Aorta (tissue), 5 donors: ENCODE measurements at regions of chr3 and their contacts with region 1.

Region 1: DNA sequence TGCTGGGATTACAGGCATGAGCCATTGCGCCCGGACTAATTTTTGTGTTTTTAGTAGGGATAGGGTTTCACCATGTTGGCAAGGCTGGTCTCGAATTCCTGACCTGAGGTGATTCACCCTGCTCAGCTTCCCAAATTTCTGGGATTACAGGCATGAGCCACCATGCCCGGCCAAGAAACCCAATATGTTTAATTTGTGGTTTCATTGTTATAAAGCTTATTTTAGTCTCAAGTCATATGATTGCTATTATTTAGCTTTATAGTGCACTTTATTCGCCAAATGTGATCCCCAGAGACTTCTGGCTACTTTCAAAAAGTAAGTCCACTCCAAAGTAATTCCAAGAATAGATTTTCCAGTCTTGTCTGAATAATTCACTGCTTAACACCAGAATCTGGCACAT is 19.3 kb upstream of the SLC4A7 start:
- DNase-seq: peak; percentile 76 to 82
- ATAC-seq: peak; percentile 81
- H3K4me3 ChIP-seq: no peak overlapping the region
- H3K27ac ChIP-seq: peak overlapping the region; percentile 44 to 76
- H3K4me1 ChIP-seq: peaks cover 0 to 3% of the 10 kb centered on the region in 2 donors
- H3K27me3 ChIP-seq: no peaks in the 10 kb centered on the region

Region 2: GRCh38 chr3:27160146-27160545 is 343.4 kb before region 1 on chr3:
- intact Hi-C with region 1: no loop called
- DNase-seq: no peak
- ATAC-seq: no peak
- H3K4me3 ChIP-seq: no peak overlapping the region
- H3K27ac ChIP-seq: no peak overlapping the region
- H3K4me1 ChIP-seq: no peaks in the 10 kb centered on the region
- H3K27me3 ChIP-seq: no peaks in the 10 kb centered on the region

Region 3: DNA sequence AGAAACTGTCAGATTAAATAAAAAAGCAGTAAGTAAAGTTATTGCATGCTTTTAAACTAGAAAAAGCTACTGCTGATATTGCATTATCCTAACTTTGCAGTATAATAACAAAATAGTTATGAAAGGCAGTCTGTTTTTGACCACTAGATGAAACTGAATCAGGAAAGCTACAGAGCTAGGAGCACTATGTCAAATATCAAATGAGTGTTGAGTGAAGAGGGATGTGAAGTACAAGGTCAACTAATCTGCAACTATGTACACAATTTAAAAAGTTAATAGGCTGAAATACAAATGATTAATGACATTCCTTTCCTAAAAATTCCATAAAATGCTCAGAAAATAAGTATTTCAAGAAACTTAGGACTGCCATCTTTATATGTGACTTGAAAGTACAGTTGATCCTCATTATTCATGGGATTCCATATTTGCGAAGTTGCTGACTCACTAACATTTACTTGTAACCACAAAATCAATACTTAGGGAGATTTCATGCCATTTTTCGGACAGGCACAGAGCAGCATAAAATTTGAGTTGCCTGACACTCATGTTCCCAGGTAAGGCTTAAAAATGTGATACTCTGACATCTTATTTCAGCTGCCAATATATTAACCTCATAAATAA is 53.9 kb before region 1 on chr3:
- intact Hi-C with region 1: no loop called
- DNase-seq: no peak
- ATAC-seq: no peak
- H3K4me3 ChIP-seq: no peak overlapping the region
- H3K27ac ChIP-seq: no peak overlapping the region
- H3K4me1 ChIP-seq: no peaks in the 10 kb centered on the region
- H3K27me3 ChIP-seq: no peaks in the 10 kb centered on the region

Region 4: DNA sequence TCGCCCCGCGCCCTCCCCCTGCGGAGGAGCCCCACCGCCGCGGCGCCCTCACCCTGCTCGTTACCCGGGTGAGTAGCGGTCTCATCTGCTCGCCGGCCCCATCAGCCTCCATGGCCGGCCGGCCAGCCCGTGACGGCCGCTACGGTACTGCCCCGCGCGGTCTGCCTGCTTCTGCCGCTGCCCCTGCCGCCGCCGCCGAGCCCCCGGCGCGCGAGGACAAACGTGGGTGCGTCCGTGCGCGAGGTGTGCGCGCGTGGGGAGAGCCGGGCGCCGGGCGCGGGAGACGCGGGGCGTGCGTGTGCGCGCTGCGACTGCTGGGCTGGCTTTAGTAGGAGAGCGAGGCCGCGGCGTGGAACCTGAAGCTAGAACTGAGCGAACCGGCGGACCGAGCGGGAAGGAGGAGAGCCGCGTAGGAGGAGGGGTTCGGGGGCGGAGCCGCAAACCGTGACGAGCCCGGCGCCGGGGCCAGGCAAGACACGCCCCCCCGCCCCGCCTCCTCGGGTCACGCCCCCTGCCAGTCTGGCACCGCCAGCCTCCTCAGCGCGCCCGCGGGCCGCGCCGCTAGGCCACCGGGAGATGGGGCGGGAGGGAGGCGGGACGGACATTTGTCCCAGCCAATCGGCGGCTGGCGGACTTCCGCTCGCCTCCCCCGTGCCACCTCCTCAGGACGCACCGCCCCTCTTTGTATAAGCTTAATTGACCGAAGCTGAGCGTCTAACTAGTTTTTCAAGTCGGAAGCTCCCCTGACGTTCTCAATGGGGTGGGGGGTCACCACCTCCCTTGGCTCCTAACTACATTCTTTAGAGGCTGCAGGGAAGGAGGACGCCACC is 19.3 kb before region 1 on chr3 and contains the start of gene SLC4A7:
- intact Hi-C with region 1: loop called in 1 of 2 experiments (anchors 1 kb)
- DNase-seq: peak; percentile 99 to 100
- ATAC-seq: peak; percentile 99
- H3K4me3 ChIP-seq: peak within 1 kb of the TSS; percentile 84 to 96
- H3K27ac ChIP-seq: peak within 1 kb of the TSS; percentile 71 to 91
- H3K4me1 ChIP-seq: no peaks in the 10 kb centered on the region
- H3K27me3 ChIP-seq: no peaks in the 10 kb centered on the region
- total RNA-seq, gene SLC4A7: 61.0 to 62.8 TPM

Region 5: DNA sequence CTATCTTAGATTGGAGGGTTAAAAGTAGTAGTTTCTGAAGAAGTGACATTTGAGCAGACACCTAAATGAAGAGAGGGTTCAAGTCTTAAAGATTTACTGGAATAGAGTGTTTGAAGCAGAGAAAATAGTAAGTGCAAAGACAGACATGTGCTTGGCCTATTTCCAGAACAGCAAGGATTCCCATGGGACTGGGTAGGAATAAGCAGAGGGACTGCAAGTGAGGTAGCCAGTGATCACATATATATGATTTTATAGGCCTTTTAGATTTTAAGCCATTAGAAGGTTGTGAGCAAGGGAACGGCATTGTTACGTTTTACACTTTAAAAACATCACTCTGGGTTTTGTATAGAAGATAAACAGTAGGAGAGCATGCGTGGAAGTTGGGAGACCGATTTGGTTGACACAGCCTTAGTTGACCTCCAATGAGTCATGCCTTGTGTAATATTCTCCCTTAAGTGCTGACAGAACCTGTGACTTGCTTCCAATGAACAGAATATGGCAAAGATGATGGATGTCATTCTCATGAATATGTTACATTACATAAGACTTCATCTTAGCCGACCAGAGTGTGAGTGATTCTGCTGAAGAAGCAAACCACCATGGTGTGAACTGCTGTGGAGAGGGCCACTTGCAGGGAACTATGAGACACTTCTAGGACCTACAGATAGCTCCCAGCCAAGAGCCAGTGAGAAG is 17.8 kb after region 1 on chr3:
- intact Hi-C with region 1: loop called in 1 of 2 experiments (anchors 2 kb)
- DNase-seq: peak in 1 of 2 donors; percentile 60
- ATAC-seq: peak; percentile 82
- H3K4me3 ChIP-seq: no peak overlapping the region
- H3K27ac ChIP-seq: peak overlapping the region; percentile 30 to 80
- H3K4me1 ChIP-seq: peaks cover 0 to 16% of the 10 kb centered on the region in 2 donors
- H3K27me3 ChIP-seq: no peaks in the 10 kb centered on the region

Region 6: DNA sequence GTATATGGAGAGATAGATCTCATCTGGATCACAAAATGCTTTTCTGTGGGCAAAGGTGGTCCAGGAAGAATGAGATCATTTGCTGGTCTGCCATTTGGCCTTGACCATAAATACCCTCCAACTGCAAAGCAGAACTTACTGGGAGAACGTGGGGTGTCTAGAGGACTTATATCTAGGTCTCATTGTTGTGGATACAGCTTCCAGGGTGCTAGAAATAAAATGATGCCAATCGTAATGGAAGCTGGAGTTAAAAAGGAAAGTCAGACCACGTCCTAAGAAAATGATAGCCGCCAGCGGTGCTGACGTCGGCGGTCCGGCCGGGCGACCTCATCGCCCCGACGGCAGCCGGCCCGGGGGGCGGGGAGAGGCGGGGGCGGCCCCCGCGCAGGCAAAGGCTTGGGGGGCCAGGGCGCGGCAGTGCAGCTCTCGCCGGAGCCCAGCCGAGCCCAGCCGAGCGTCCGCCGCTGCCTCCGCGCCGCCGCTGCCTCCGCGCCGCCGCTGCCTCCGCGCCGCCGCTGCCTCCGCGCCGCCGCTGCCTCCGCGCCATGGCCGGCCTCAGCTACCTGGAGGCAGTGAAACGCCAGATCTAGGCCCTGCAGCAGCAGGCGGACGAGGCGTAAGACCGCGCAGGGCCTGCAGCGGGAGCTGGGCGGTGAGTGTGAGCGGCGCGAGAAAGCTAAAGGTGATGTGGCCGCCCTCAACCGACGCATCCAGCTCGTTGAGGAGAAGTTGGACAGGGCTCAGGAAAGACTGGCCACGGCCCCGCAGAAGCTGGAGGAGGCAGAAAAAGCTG is 129.1 kb after region 1 on chr3:
- intact Hi-C with region 1: loop called in 1 of 2 experiments (anchors 10 kb)
- DNase-seq: peak; percentile 73 to 85
- ATAC-seq: peak; percentile 83
- H3K4me3 ChIP-seq: peak overlapping the region; percentile 52 to 65
- H3K27ac ChIP-seq: peak overlapping the region; percentile 88 to 93
- H3K4me1 ChIP-seq: peaks cover 0 to 2% of the 10 kb centered on the region in 2 donors
- H3K27me3 ChIP-seq: no peaks in the 10 kb centered on the region

Region 7: DNA sequence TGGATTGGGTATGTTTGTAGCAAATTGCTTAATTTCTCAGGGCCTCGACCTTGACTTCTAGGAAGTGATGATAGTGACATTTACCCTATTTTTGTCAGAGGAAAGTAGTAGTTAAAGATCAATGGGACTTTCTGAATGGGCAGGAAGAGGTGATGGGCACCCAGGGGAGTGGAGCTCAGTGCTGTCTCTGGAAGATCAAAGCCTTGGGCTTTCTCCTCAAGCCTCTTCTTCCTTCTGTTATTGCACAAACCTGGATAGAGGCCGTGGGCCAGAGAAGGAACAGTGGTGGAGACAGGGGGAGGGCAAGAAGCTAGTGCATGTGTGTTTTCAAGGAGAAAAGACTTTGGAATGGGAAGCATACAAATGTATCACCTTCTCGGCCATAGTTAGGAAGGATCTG is 263.5 kb after region 1 on chr3:
- intact Hi-C with region 1: no loop called
- DNase-seq: no peak
- ATAC-seq: no peak
- H3K4me3 ChIP-seq: no peak overlapping the region
- H3K27ac ChIP-seq: no peak overlapping the region
- H3K4me1 ChIP-seq: no peaks in the 10 kb centered on the region
- H3K27me3 ChIP-seq: no peaks in the 10 kb centered on the region